ENCODE measurements at regions of chrX and their contacts with region 1.

Region 1: GRCh38 chrX:71283403-71284143 is at the start of gene NONO:
- DNase-seq: peak; percentile 75
- ATAC-seq: peak; percentile 85
- H3K4me3 Mint-ChIP-seq: peak within 1 kb of the TSS; percentile 93
- H3K27ac Mint-ChIP-seq: peak within 1 kb of the TSS; percentile 99
- H3K4me1 Mint-ChIP-seq: peaks cover 18% of the 10 kb centered on the region
- H3K27me3 Mint-ChIP-seq: no peaks in the 10 kb centered on the region
- total RNA-seq, gene NONO: 438 to 466 TPM

Region 2: DNA sequence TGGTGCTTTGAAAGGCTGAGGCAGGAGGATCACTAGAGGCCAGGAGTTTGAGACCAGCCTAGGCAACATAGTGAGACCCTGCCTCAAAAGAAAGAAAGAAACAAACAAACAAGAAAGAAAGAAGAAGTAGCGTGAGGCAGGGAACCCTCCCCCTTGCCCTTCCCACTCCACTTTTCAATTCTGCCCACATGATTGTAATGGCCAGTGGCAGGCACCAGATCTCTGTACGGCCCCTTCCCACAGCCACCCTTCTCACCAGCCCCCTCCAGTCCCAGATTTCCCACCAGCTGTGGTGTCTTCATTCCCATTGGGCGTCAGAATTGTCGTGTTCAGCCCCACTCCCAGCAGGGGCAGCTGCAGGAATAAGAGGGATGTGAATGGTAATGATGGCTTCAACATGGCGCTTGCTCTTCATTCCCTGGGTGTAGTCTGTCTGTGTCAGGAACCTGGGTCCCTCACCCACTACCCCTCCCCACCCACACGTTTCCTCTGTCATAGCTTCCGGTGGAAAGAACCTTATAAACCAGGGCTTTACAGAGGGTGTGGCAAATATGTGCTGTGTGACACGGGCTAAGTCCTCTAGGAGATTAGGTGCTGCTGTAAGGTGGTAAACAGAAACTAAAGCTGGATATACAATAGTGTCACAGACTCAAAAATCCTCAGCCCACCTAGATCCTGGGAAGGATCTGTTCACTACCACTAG is 172.3 kb before region 1 on chrX and contains the start of gene IL2RG:
- POLR2A ChIA-PET with region 1: interaction called, 10 read pairs
- DNase-seq: peak; percentile 53
- ATAC-seq: peak; percentile 80
- H3K4me3 Mint-ChIP-seq: peak within 1 kb of the TSS; percentile 99
- H3K27ac Mint-ChIP-seq: peak within 1 kb of the TSS; percentile 95
- H3K4me1 Mint-ChIP-seq: peaks cover 30% of the 10 kb centered on the region
- H3K27me3 Mint-ChIP-seq: no peaks in the 10 kb centered on the region
- total RNA-seq, gene IL2RG: 389 to 395 TPM

Region 3: DNA sequence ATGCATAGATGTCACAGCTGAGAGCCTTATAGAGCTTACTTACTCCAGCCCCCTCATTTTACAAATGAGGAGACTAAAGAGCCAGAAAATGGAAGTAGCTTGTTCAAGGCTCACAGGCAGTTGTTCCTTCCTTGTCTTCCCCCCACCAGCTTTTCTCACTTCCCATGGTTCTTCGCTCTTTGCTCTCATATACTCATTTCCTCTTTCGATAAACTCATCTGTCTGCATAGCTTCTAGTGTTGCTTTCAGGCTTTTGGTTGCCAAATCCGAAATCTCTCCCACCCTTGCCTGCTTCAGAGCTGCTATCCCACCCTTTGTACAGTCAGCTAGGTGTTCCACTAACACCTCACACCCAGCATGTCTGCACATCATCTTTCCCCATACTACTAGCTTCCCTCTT is 85.5 kb before region 1 on chrX:
- POLR2A ChIA-PET with region 1: interaction called, 31 read pairs
- DNase-seq: no peak
- ATAC-seq: peak; percentile 47
- H3K4me3 Mint-ChIP-seq: peak overlapping the region; percentile 84
- H3K27ac Mint-ChIP-seq: peak overlapping the region; percentile 95
- H3K4me1 Mint-ChIP-seq: peaks cover 10% of the 10 kb centered on the region
- H3K27me3 Mint-ChIP-seq: no peaks in the 10 kb centered on the region

Region 4: GRCh38 chrX:71254092-71254941 is 29.3 kb before region 1 on chrX and contains the start of gene ZMYM3:
- POLR2A ChIA-PET with region 1: interaction called, 43 read pairs
- DNase-seq: peak; percentile 79
- ATAC-seq: peak; percentile 90
- H3K4me3 Mint-ChIP-seq: peak within 1 kb of the TSS; percentile 90
- H3K27ac Mint-ChIP-seq: peak within 1 kb of the TSS; percentile 94
- H3K4me1 Mint-ChIP-seq: peaks cover 18% of the 10 kb centered on the region
- H3K27me3 Mint-ChIP-seq: no peaks in the 10 kb centered on the region
- total RNA-seq, gene ZMYM3: 38.9 to 39.3 TPM

Region 5: DNA sequence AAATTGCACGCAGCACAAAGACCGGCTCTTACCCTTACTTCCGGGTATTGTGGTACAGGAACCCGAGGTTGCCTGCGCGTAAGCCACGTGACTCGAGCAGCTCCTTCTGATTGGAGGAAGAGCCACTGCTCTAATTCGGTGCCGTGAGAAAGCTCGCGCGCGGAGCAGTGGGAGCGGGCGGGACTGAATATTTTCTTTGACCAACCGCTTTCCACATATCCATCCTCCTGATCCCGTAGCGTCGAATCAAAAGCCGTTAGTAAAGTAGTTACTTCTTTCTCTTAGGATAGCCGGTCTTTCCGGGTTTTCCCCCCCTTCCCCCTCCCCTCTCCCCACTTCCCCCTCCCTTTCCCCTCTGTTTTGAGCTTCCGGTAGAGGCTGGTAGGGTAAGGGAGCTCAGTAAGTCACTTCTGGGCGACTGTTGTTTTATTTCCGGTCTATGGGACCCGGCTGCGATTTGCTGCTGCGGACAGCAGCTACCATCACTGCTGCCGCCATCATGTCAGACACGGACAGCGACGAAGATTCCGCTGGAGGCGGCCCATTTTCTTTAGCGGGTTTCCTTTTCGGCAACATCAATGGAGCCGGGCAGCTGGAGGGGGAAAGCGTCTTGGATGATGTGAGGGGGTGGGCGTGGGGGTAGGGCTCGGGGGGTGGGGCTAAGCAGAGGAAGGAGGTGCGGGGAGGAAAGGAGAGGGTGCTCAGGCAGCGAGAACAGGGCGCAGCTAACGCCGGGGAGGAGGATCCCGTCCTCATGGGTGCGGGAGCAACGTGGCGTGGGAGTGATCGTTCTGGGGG is 82.5 kb after region 1 on chrX and contains the start of gene TAF1:
- POLR2A ChIA-PET with region 1: interaction called, 21 read pairs
- DNase-seq: peak; percentile 81
- ATAC-seq: peak; percentile 93
- H3K4me3 Mint-ChIP-seq: peak within 1 kb of the TSS; percentile 97
- H3K27ac Mint-ChIP-seq: peak within 1 kb of the TSS; percentile 98
- H3K4me1 Mint-ChIP-seq: peaks cover 13% of the 10 kb centered on the region
- H3K27me3 Mint-ChIP-seq: no peaks in the 10 kb centered on the region
- total RNA-seq, gene TAF1: 64.7 to 66.8 TPM